Psoas muscle (tissue), 8 donors: ENCODE measurements at regions of chr13 and their contacts with region 1.

Region 1: DNA sequence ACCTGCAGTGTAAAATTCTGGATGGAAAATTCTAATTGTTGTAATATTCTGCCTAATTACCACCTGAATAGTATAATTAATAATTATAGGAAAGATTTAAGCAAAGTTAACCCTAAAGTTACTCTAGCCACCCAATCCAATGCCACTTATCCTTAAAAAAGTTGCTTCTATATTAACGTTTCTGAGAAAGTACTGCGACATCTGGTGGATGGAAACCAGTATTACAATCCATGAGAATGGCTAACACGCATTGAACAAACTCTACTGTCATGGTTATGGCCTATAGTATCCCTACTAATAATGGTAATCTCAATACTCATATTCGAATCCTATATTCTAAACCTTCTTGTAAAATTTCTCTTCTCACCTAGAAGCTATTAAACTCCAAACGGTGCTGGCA is 1551.8 kb downstream of the SLITRK1 start:
- DNase-seq: no peak
- ATAC-seq: no peak
- H3K4me3 ChIP-seq: no peak overlapping the region
- H3K27ac ChIP-seq: no peak overlapping the region
- H3K4me1 ChIP-seq: no peaks in the 10 kb centered on the region
- H3K27me3 ChIP-seq: no peaks in the 10 kb centered on the region
- CTCF ChIP-seq: no peak

Region 2: DNA sequence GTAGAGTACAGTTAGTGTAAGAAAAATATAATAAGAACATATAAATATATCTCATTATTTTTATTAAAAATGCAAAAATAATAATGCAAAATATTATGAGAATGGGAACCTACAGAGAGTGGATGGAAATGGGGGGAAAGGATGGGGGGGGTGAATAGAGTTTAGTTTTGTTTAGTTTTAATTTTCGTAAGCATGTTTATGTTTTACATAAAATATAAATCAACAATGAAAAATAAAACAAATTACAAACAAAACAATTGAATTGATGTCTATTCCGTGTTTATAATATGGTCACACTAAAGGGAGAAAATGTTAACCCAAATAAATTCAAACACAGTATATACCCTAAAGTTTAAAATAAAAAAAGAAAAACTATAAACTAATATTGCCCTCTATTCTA is 272.1 kb before region 1 on chr13:
- intact Hi-C with region 1: loop called in 1 of 2 experiments (anchors 5 kb)
- DNase-seq: no peak
- ATAC-seq: no peak
- H3K4me3 ChIP-seq: no peak overlapping the region
- H3K27ac ChIP-seq: no peak overlapping the region
- H3K4me1 ChIP-seq: no peaks in the 10 kb centered on the region
- H3K27me3 ChIP-seq: no peaks in the 10 kb centered on the region
- CTCF ChIP-seq: no peak

Region 3: GRCh38 chr13:82407321-82407720 is 76.8 kb after region 1 on chr13:
- intact Hi-C with region 1: no loop called
- DNase-seq: no peak
- ATAC-seq: no peak
- H3K4me3 ChIP-seq: no peak overlapping the region
- H3K27ac ChIP-seq: no peak overlapping the region
- H3K4me1 ChIP-seq: no peaks in the 10 kb centered on the region
- H3K27me3 ChIP-seq: no peaks in the 10 kb centered on the region
- CTCF ChIP-seq: no peak